Cardiac septum (tissue), 1 donor: ENCODE measurements at regions of chr5 and their contacts with region 1.

Region 1: DNA sequence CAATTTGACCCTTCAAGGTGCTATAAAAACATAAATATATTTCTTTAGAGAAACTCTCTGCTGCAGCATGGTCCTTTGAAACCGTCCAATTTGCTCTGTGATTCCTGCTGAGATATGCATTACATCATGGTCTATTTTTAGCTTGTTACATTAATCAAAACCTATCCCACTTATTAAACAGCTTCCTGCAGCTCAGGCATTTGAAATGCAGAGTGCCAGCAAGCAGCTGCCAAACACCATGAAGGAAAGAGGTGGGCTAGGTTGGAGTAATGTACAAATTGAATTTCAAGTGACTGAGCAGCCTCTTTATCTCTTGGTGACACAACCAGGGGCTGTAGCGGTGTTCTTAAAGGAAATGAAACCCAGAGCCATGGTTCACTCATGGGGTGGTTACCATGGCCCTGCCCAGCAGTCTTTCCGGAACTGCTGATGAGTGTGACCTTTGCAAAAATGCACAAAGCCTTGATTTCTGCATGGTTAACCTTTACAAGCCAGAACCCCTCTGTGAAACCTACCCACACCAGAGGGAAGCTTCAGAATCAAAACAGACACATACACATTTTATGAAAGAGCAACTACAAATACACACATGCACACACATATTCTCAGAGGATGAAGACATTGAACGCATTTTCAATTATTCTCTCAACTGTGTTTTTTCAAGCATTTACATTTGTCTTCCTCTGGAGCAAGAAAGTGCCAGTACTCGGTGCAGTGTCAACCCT is 155.8 kb upstream of the ZNF608 start:
- DNase-seq: no peak

Region 2: GRCh38 chr5:124649491-124650146 is 252.6 kb before region 1 on chr5:
- intact Hi-C with region 1: loop called (anchors 2 kb)
- DNase-seq: peak; percentile 94

Region 3: GRCh38 chr5:124812754-124813358 is 89.4 kb before region 1 on chr5:
- intact Hi-C with region 1: loop called (anchors 5 kb)
- DNase-seq: no peak

Region 4: GRCh38 chr5:125043781-125044391 is 141.6 kb after region 1 on chr5:
- intact Hi-C with region 1: loop called (anchors 5 kb)
- DNase-seq: peak; percentile 87